ENCODE measurements at regions of chrX and their contacts with region 1.

Region 1: GRCh38 chrX:109880629-109881028 is 122.3 kb upstream of the TMEM164 start:
- DNase-seq: no peak
- ATAC-seq: no peak
- H3K4me3 ChIP-seq: no peak overlapping the region
- H3K27ac ChIP-seq: no peak overlapping the region
- H3K4me1 ChIP-seq: 0 out of 3 replicates have a peak, but pooled peaks cover 6% of the 10 kb centered on the region
- CTCF ChIP-seq: no peak
- EP300 ChIP-seq: no peak
- POLR2A ChIP-seq: no peak
- RAD21 ChIP-seq: no peak

Region 2: GRCh38 chrX:109714340-109714958 is 166.2 kb before region 1 on chrX:
- CTCF ChIA-PET with region 1: interaction called, 28 read pairs
- POLR2A ChIA-PET with region 1: no interaction called
- DNase-seq: peak in 1 of 2 experiments; percentile 53
- ATAC-seq: peak; percentile 68 to 88; a peak in 5 of 6 replicates
- H3K4me3 ChIP-seq: no peak overlapping the region
- H3K27ac ChIP-seq: peak overlapping the region; percentile 64
- H3K4me1 ChIP-seq: peaks cover 36% of the 10 kb centered on the region
- CTCF ChIP-seq: no peak
- EP300 ChIP-seq: no peak
- POLR2A ChIP-seq: no peak
- RAD21 ChIP-seq: no peak

Measured in A549 (cell line).